PC-9 (cell line): ENCODE measurements at regions of chr2 and their contacts with region 1.

Region 1: GRCh38 chr2:215949991-215950404 is 63.4 kb downstream of the MREG start:
- DNase-seq: peak; percentile 5 to 61
- H3K4me3 ChIP-seq: no peak overlapping the region
- H3K27ac ChIP-seq: no peak overlapping the region
- H3K4me1 ChIP-seq: no peaks in the 10 kb centered on the region; the same call in 1 of the 2 replicates
- H3K27me3 ChIP-seq: no peaks in the 10 kb centered on the region
- CTCF ChIP-seq: peak; percentile 88

Region 2: GRCh38 chr2:215933151-215933550 is 16.8 kb before region 1 on chr2:
- CTCF ChIA-PET with region 1: no interaction called
- POLR2A ChIA-PET with region 1: no interaction called
- intact Hi-C with region 1: no loop called
- DNase-seq: no peak
- H3K4me3 ChIP-seq: no peak overlapping the region
- H3K27ac ChIP-seq: no peak overlapping the region
- H3K4me1 ChIP-seq: peaks cover 30% of the 10 kb centered on the region
- H3K27me3 ChIP-seq: no peaks in the 10 kb centered on the region
- CTCF ChIP-seq: no peak

Region 3: GRCh38 chr2:216023055-216023648 is 73.2 kb after region 1 on chr2:
- CTCF ChIA-PET with region 1: interaction called, 19 read pairs
- POLR2A ChIA-PET with region 1: interaction called, 4 read pairs
- intact Hi-C with region 1: loop called (anchors 1 kb)
- DNase-seq: peak; percentile 45 to 61
- H3K4me3 ChIP-seq: no peak overlapping the region
- H3K27ac ChIP-seq: no peak overlapping the region
- H3K4me1 ChIP-seq: no peaks in the 10 kb centered on the region
- H3K27me3 ChIP-seq: no peaks in the 10 kb centered on the region
- CTCF ChIP-seq: peak; percentile 90